ENCODE measurements at regions of chr2 and their contacts with region 1.

Region 1: GRCh38 chr2:69509007-69509749 is 71.9 kb upstream of the NFU1 start:
- DNase-seq: no peak
- H3K4me3 Mint-ChIP-seq: no peak overlapping the region
- H3K27ac Mint-ChIP-seq: peak overlapping the region; percentile 86
- H3K4me1 Mint-ChIP-seq: peaks cover 36% of the 10 kb centered on the region
- H3K27me3 Mint-ChIP-seq: no peaks in the 10 kb centered on the region

Region 2: GRCh38 chr2:69386789-69387734 is 122.1 kb before region 1 on chr2 and contains the start of gene GFPT1:
- intact Hi-C with region 1: loop called (anchors 5 kb)
- DNase-seq: peak; percentile 92
- H3K4me3 Mint-ChIP-seq: peak within 1 kb of the TSS; percentile 88
- H3K27ac Mint-ChIP-seq: peak within 1 kb of the TSS; percentile 92
- H3K4me1 Mint-ChIP-seq: peaks cover 41% of the 10 kb centered on the region
- H3K27me3 Mint-ChIP-seq: no peaks in the 10 kb centered on the region
- total RNA-seq, gene GFPT1: 55.7 and 56.6 TPM in 2 replicates

Region 3: DNA sequence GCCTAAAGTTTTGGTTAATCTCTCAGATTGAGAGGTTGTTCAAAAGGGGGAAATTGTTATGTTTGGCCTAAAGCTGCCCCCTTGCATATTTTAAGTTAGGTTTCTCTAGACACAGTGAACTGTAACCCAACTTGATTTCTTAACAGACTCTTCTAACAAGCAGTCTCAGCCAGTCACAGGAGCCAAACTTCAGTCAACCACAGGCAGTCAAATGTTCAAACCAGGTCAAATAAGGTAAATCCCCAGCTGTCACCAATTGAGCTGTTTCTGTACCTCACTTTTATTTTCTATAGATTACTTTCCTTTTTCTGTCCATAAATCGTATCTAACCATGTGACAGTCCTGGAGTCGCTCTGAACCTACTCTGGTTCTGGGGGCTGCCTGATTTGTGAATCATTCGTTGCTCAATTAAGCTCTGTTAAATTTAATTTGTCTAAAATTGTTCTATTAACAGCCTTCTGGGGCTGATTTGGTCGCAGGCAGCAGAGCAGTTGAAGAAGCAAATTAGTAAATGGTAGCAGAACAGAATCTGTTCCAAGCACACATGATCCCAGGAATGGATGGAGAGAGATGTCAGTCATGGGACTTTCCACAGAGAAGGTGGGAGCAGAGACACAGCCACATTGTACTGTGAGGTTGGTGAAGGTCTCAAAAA is 55.6 kb before region 1 on chr2:
- intact Hi-C with region 1: loop called (anchors 1 kb)
- DNase-seq: no peak
- H3K4me3 Mint-ChIP-seq: no peak overlapping the region
- H3K27ac Mint-ChIP-seq: peak overlapping the region; percentile 11
- H3K4me1 Mint-ChIP-seq: peaks cover 13% of the 10 kb centered on the region
- H3K27me3 Mint-ChIP-seq: no peaks in the 10 kb centered on the region

Region 4: GRCh38 chr2:69490486-69490885 is 18.7 kb before region 1 on chr2:
- intact Hi-C with region 1: loop called (anchors 1 kb)
- DNase-seq: no peak
- H3K4me3 Mint-ChIP-seq: no peak overlapping the region
- H3K27ac Mint-ChIP-seq: peak overlapping the region; percentile 23
- H3K4me1 Mint-ChIP-seq: peaks cover 43% of the 10 kb centered on the region
- H3K27me3 Mint-ChIP-seq: no peaks in the 10 kb centered on the region

Region 5: DNA sequence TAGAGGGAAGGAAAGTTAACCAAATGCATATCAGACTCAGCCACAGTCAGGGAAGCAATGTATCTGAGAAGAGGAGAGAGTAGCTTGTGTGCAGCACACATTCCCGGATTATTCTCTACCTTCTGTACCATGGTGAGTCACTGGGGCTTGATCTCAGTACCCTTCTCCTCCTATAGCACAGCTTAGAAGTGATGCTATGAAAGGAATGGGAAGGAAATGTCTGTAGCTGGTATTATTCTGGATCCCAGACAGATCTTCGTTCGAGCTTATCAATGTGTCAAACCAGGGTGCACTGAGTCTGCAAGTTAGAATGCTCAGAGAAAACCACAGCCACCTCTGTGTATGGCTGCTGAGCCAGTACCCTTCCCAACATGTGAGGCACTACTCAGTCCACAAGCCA is 16.1 kb after region 1 on chr2:
- intact Hi-C with region 1: no loop called
- DNase-seq: no peak
- H3K4me3 Mint-ChIP-seq: no peak overlapping the region
- H3K27ac Mint-ChIP-seq: no peak overlapping the region
- H3K4me1 Mint-ChIP-seq: peaks cover 6% of the 10 kb centered on the region
- H3K27me3 Mint-ChIP-seq: no peaks in the 10 kb centered on the region

Measured in activated T-helper 2 cell treated with anti-CD3 and anti-CD28 coated beads, Interferon-gamma antibody, Interleukin-2, Interleukin-4, amounts not matched to agents 10 μg/mL and 5 μg/mL and 100 μg/mL, durations not matched to agents 14 hours and 24 hours and 36 hours (primary cell).